CD8-positive, alpha-beta T cell (primary cell): ENCODE measurements at regions of chr17 and their contacts with region 1.

Region 1: GRCh38 chr17:47188876-47189731 is at the start of gene CDC27:
- DNase-seq: peak; percentile 99 to 100 (median 100)
- ATAC-seq: peak; percentile 93
- H3K4me3 ChIP-seq: peak within 1 kb of the TSS; percentile 78 to 89
- H3K4me3 Mint-ChIP-seq: peak within 1 kb of the TSS; percentile 95
- H3K27ac ChIP-seq: peak within 1 kb of the TSS; percentile 81 to 91
- H3K27ac Mint-ChIP-seq: peak within 1 kb of the TSS; percentile 92
- H3K4me1 ChIP-seq: peaks cover 12% of the 10 kb centered on the region
- H3K4me1 Mint-ChIP-seq: peaks cover 41% of the 10 kb centered on the region
- H3K27me3 ChIP-seq: no peaks in the 10 kb centered on the region
- H3K27me3 Mint-ChIP-seq: no peaks in the 10 kb centered on the region
- CTCF ChIP-seq: no peak
- total RNA-seq, gene CDC27: 44.5 to 48.6 TPM

Region 2: DNA sequence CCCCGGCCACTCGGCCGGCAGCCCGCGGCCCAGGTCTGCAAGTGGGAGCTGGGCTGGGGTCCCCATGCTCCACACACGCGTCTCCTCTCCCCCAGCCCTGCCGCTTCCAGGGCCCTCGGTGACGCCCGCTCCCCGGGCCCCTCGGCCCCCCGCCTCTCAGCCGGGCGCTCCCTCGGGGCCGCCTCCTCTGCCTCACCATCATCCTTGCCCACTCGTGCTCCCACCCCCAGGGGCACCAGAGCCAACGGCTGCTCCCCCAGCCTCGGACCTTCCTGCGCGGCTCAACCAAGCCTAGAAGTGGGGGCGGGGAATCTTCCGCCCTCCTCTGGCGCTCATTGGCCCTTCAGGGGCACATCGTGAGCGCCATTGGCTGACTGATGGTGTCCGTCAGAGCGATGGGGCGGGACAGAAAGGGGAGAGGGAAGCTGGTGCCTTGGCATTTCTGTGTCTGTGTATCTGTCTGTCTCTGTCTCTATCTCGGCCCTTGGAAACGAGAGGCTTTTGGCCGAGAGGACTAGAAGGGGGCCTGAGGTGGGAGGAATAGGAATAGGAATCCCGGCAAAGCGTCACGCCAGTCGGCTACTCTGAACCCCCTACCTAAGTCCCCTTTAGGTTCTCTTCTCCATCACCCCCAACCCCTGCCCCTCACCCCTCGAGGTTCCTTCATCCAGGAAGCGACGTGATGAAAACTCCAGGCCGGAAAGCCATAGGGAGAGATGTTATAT is 89.0 kb before region 1 on chr17:
- CTCF ChIA-PET with region 1: no interaction called
- POLR2A ChIA-PET with region 1: no interaction called
- intact Hi-C with region 1: loop called in 1 of 2 experiments (anchors 10 kb)
- DNase-seq: peak; percentile 79 to 93 (median 89)
- ATAC-seq: peak; percentile 99
- H3K4me3 ChIP-seq: peak overlapping the region; percentile 51 to 82
- H3K4me3 Mint-ChIP-seq: peak overlapping the region; percentile 100
- H3K27ac ChIP-seq: peak overlapping the region; percentile 35 to 49
- H3K27ac Mint-ChIP-seq: peak overlapping the region; percentile 99
- H3K4me1 ChIP-seq: peaks cover 8% of the 10 kb centered on the region
- H3K4me1 Mint-ChIP-seq: peaks cover 30% of the 10 kb centered on the region
- H3K27me3 ChIP-seq: no peaks in the 10 kb centered on the region
- H3K27me3 Mint-ChIP-seq: no peaks in the 10 kb centered on the region
- CTCF ChIP-seq: no peak

Region 3: DNA sequence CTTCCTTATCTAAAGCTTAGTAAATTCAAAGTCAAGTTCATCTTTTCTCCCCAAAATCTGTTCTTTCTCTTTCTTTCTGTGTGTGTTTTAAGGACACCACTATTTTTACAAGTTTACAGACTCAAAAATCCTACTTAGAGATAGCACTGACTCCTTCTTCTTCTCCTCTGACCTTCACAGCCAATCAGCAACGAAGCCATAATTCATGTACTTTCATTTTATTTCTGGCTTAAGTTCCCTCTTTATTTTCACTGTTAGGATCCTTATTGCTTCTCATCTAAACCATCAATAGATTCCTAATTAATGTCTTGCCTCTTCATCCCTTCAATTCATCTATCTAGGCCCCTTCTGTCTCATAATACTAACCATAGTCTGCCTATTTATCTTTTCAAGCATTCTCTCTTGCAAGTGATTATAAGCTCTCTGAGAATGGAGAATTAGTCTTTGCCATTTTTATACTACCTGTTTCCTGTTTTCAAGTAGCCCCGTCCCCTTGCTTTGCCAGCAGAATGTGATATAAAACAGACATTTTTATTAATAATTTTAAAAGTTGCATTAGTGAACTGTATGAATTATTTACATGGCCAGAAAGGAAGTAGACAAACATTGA is 27.0 kb before region 1 on chr17:
- CTCF ChIA-PET with region 1: no interaction called
- POLR2A ChIA-PET with region 1: no interaction called
- intact Hi-C with region 1: no loop called
- DNase-seq: no peak
- ATAC-seq: no peak
- H3K4me3 ChIP-seq: no peak overlapping the region
- H3K4me3 Mint-ChIP-seq: peak overlapping the region; percentile 30
- H3K27ac ChIP-seq: no peak overlapping the region
- H3K27ac Mint-ChIP-seq: peak overlapping the region; percentile 66
- H3K4me1 ChIP-seq: no peaks in the 10 kb centered on the region
- H3K4me1 Mint-ChIP-seq: peaks cover 12% of the 10 kb centered on the region
- H3K27me3 ChIP-seq: no peaks in the 10 kb centered on the region
- H3K27me3 Mint-ChIP-seq: no peaks in the 10 kb centered on the region
- CTCF ChIP-seq: no peak

Region 4: GRCh38 chr17:47205419-47205963 is 16.4 kb after region 1 on chr17:
- CTCF ChIA-PET with region 1: interaction called, 6 read pairs
- POLR2A ChIA-PET with region 1: interaction called, 6 read pairs
- intact Hi-C with region 1: loop called (anchors 1 kb)
- DNase-seq: peak; percentile 25 to 89 (median 67)
- ATAC-seq: peak; percentile 72
- H3K4me3 ChIP-seq: peak overlapping the region; percentile 18 to 44
- H3K4me3 Mint-ChIP-seq: peak overlapping the region; percentile 73
- H3K27ac ChIP-seq: peak overlapping the region; percentile 48 to 95
- H3K27ac Mint-ChIP-seq: peak overlapping the region; percentile 97
- H3K4me1 ChIP-seq: peaks cover 31% of the 10 kb centered on the region
- H3K4me1 Mint-ChIP-seq: peaks cover 49% of the 10 kb centered on the region
- H3K27me3 ChIP-seq: no peaks in the 10 kb centered on the region
- H3K27me3 Mint-ChIP-seq: no peaks in the 10 kb centered on the region
- CTCF ChIP-seq: no peak

Region 5: DNA sequence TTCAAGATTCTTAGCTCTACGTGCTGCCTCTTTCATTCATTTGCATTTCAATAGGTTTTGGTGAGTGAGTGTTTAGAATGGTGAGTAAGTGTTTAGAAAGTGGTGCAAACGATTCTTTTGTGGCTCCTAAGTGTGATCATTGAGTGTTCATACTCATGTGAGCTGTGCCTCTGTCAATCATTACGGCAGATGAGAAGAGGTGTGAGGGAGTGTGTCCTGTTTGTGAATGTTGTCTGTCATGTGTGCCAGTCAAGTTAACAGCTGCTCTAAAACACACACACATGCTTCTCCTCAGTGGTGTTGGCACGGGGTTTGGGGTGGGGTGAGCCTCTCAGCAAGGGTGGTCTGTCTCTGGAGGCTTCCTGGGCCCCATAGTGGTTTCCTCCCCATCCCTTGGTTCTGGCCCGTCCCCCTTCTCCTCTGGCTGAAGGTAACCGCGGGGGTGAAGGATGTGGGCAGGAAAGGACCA is 31.5 kb after region 1 on chr17:
- CTCF ChIA-PET with region 1: no interaction called
- POLR2A ChIA-PET with region 1: interaction called, 4 read pairs
- intact Hi-C with region 1: loop called (anchors 1 to 5 kb)
- DNase-seq: peak in 7 of 9 experiments; percentile 21 to 80 (median 51)
- ATAC-seq: peak; percentile 72
- H3K4me3 ChIP-seq: no peak overlapping the region
- H3K4me3 Mint-ChIP-seq: peak overlapping the region; percentile 10
- H3K27ac ChIP-seq: peak overlapping the region in 1 of 2 experiments; percentile 63
- H3K27ac Mint-ChIP-seq: peak overlapping the region; percentile 60
- H3K4me1 ChIP-seq: peaks cover 52% of the 10 kb centered on the region
- H3K4me1 Mint-ChIP-seq: peaks cover 43% of the 10 kb centered on the region
- H3K27me3 ChIP-seq: no peaks in the 10 kb centered on the region
- H3K27me3 Mint-ChIP-seq: no peaks in the 10 kb centered on the region
- CTCF ChIP-seq: no peak

Region 6: DNA sequence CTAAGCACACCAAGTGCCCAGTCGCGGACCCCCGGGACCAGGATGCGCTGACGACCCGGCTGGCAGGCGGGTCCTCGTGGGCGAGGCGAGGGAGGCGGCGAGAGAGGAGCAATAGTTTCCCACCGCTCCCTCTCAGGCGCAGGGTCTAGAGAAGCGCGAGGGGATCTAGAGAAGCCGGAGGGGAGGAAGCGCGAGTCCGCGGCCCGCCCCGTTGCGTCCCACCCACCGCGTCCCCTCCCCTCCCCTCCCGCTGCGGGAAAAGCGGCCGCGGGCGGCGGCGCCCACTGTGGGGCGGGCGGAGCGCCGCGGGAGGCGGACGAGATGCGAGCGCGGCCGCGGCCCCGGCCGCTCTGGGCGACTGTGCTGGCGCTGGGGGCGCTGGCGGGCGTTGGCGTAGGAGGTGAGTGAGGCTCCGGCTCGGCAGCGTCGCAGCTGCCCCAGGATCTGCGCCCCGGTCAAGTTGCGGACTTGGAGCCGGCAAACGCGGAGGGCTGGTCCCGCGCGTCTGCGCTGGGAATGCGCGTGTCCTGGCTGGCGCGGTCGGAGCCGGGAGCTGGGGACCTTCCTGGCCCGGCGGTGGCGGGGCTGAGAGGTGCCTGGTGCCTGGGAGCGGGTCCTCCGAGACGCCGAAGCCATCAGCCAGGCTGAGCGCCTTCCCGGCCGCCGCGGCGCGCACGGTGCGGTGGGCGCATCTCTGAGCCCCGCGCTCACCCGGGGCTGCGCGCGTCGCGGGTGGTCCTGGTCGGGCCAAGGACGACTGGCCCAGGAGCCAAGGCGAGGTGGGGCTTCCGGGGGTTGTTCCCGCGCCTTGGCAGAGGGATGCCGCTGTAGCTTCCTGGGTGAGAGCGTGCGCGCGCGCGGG is 64.7 kb after region 1 on chr17 and contains the start of gene ITGB3:
- CTCF ChIA-PET with region 1: no interaction called
- POLR2A ChIA-PET with region 1: interaction called, 3 read pairs
- intact Hi-C with region 1: loop called in 1 of 2 experiments (anchors 10 kb)
- DNase-seq: peak; percentile 28 to 78 (median 59)
- ATAC-seq: peak; percentile 90
- H3K4me3 ChIP-seq: peak within 1 kb of the TSS; percentile 44 to 49
- H3K4me3 Mint-ChIP-seq: peak within 1 kb of the TSS; percentile 87
- H3K27ac ChIP-seq: no peak within 1 kb of the TSS
- H3K27ac Mint-ChIP-seq: no peak within 1 kb of the TSS
- H3K4me1 ChIP-seq: peaks cover 4% of the 10 kb centered on the region
- H3K4me1 Mint-ChIP-seq: peaks cover 12% of the 10 kb centered on the region
- H3K27me3 ChIP-seq: peaks cover 0 to 12% of the 10 kb centered on the region in 2 experiments
- H3K27me3 Mint-ChIP-seq: peaks cover 63% of the 10 kb centered on the region
- CTCF ChIP-seq: no peak
- total RNA-seq, gene ITGB3: not detected

Region 7: GRCh38 chr17:47295062-47295845 is 106.2 kb after region 1 on chr17:
- CTCF ChIA-PET with region 1: no interaction called
- POLR2A ChIA-PET with region 1: no interaction called
- intact Hi-C with region 1: no loop called
- DNase-seq: no peak
- ATAC-seq: no peak
- H3K4me3 ChIP-seq: no peak overlapping the region
- H3K4me3 Mint-ChIP-seq: no peak overlapping the region
- H3K27ac ChIP-seq: no peak overlapping the region
- H3K27ac Mint-ChIP-seq: no peak overlapping the region
- H3K4me1 ChIP-seq: no peaks in the 10 kb centered on the region
- H3K4me1 Mint-ChIP-seq: no peaks in the 10 kb centered on the region
- H3K27me3 ChIP-seq: no peaks in the 10 kb centered on the region
- H3K27me3 Mint-ChIP-seq: peaks cover 11% of the 10 kb centered on the region
- CTCF ChIP-seq: no peak

Region 8: GRCh38 chr17:47323382-47324222 is 134.5 kb after region 1 on chr17 and contains the start of gene EFCAB13:
- CTCF ChIA-PET with region 1: no interaction called
- POLR2A ChIA-PET with region 1: no interaction called
- intact Hi-C with region 1: loop called in 1 of 2 experiments (anchors 1 kb)
- DNase-seq: peak; percentile 55 to 92 (median 79)
- ATAC-seq: peak; percentile 69
- H3K4me3 ChIP-seq: peak within 1 kb of the TSS; percentile 86 to 91
- H3K4me3 Mint-ChIP-seq: peak within 1 kb of the TSS; percentile 99
- H3K27ac ChIP-seq: peak within 1 kb of the TSS; percentile 80 to 84
- H3K27ac Mint-ChIP-seq: peak within 1 kb of the TSS; percentile 95
- H3K4me1 ChIP-seq: peaks cover 4% of the 10 kb centered on the region
- H3K4me1 Mint-ChIP-seq: peaks cover 20% of the 10 kb centered on the region
- H3K27me3 ChIP-seq: no peaks in the 10 kb centered on the region
- H3K27me3 Mint-ChIP-seq: no peaks in the 10 kb centered on the region
- CTCF ChIP-seq: peak; percentile 12
- total RNA-seq, gene EFCAB13: 10.7 to 13.1 TPM

Region 9: DNA sequence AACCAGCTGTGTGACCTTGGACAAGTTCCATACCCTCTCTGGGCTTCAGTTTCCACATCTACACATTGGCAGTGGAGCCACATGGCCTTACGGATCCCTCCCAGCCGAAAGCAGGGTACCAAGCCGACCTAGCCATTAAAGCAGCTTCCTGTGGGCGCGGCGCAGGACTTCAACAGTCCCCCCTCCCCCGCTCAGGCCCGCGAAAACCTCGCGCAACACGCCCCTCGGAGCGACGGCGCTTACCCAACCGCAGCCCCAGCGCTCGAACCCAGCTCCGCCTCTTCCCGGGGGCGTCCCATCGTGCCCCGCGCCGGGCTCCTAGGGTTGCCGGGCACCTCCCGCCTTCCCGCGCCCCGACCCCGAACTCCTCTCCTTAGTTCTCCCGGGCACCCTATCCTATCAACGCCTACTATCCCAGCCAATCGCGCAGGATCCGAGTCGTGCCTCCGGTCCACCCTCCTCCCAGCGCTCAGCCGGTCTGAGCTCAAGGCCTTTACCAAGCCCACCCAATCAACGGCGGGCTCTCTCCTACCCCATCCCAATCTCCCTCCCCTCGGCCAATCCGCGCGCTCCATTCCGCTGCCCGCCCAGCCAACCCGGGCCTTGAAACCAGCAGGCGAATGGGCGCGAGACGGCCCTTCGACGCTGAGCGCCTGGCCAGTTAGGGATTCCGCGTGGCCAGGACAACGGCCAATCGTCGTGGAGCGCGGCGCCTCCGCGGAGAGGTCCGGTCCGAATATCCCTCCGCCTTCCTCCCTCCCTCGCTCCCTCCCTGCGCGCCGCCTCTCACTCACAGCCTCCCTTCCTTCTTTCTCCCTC is 460.3 kb after region 1 on chr17 and contains the start of gene KPNB1:
- CTCF ChIA-PET with region 1: no interaction called
- POLR2A ChIA-PET with region 1: no interaction called
- intact Hi-C with region 1: loop called in 1 of 2 experiments (anchors 2 kb)
- DNase-seq: peak; percentile 94 to 99 (median 97)
- ATAC-seq: peak; percentile 82
- H3K4me3 ChIP-seq: peak within 1 kb of the TSS; percentile 70 to 89
- H3K4me3 Mint-ChIP-seq: peak within 1 kb of the TSS; percentile 100
- H3K27ac ChIP-seq: peak within 1 kb of the TSS; percentile 75 to 90
- H3K27ac Mint-ChIP-seq: peak within 1 kb of the TSS; percentile 99
- H3K4me1 ChIP-seq: peaks cover 41% of the 10 kb centered on the region
- H3K4me1 Mint-ChIP-seq: peaks cover 51% of the 10 kb centered on the region
- H3K27me3 ChIP-seq: no peaks in the 10 kb centered on the region
- H3K27me3 Mint-ChIP-seq: no peaks in the 10 kb centered on the region
- CTCF ChIP-seq: no peak
- total RNA-seq, gene KPNB1: 170 to 173 TPM